ENCODE measurements at regions of chr16 and their contacts with region 1.

Region 1: GRCh38 chr16:19601083-19601976 is 45.8 kb downstream of the VPS35L start:
- DNase-seq: peak; percentile 49
- ATAC-seq: no peak
- H3K4me3 Mint-ChIP-seq: no peak overlapping the region
- H3K27ac Mint-ChIP-seq: no peak overlapping the region
- H3K4me1 Mint-ChIP-seq: no peaks in the 10 kb centered on the region
- H3K27me3 Mint-ChIP-seq: no peaks in the 10 kb centered on the region
- CTCF ChIP-seq: peak; percentile 77

Region 2: DNA sequence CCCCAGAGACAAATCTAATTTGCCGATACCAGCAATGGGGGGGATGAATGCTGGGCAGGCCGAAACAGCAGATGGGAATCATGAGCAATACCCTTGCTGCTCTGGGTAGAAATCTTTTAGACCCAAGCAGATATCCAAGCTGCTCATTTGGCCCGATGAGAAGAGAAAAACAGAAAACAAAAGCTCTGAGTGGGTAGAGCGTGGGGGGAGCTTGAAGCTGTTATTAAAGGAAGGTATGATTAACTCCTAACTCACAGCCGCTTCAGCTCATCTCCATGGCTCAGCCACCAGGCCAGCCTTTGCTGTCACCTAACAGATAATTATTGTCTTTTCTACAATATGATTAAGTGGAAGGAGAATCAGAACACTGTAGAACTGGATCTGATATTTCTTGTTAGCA is 12.5 kb after region 1 on chr16:
- CTCF ChIA-PET with region 1: interaction called, 10 read pairs
- POLR2A ChIA-PET with region 1: interaction called, 3 read pairs
- intact Hi-C with region 1: no loop called
- DNase-seq: no peak
- ATAC-seq: no peak
- H3K4me3 Mint-ChIP-seq: no peak overlapping the region
- H3K27ac Mint-ChIP-seq: no peak overlapping the region
- H3K4me1 Mint-ChIP-seq: no peaks in the 10 kb centered on the region
- H3K27me3 Mint-ChIP-seq: no peaks in the 10 kb centered on the region
- CTCF ChIP-seq: no peak

Region 3: DNA sequence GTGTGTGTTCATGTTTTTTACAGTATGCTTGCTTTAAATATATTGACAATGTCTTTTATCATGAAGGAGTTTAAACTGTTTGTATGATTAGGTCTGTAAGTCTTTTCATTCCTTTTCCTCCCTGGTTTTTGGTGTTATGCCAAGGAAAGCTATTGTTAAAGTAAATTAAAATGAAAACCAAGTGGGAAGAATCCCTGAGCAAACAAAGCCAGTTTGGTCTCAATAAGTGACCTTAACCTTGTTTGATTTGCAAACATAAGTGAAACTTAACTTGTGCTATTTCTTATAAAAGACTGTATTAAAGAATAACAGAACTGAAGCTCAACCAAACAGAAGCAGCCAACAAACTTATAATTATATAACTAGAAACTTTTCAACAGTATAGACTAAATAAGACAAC is 412.7 kb after region 1 on chr16:
- CTCF ChIA-PET with region 1: no interaction called
- POLR2A ChIA-PET with region 1: no interaction called
- intact Hi-C with region 1: no loop called
- DNase-seq: no peak
- ATAC-seq: no peak
- H3K4me3 Mint-ChIP-seq: no peak overlapping the region
- H3K27ac Mint-ChIP-seq: no peak overlapping the region
- H3K4me1 Mint-ChIP-seq: no peaks in the 10 kb centered on the region
- H3K27me3 Mint-ChIP-seq: peaks cover 6% of the 10 kb centered on the region
- CTCF ChIP-seq: no peak

Measured in activated CD8-positive, alpha-beta T cell treated with anti-CD3 and anti-CD28 coated beads for 36 hours (primary cell).